ENCODE measurements at regions of chr4 and their contacts with region 1.

Region 1: GRCh38 chr4:76179398-76180318 is 31.5 kb upstream of the NUP54 start:
- DNase-seq: peak; percentile 66 to 76 (median 73)
- H3K4me3 ChIP-seq: no peak overlapping the region
- H3K4me3 Mint-ChIP-seq: no peak overlapping the region
- H3K27ac ChIP-seq: no peak overlapping the region
- H3K27ac Mint-ChIP-seq: no peak overlapping the region
- H3K4me1 ChIP-seq: no peaks in the 10 kb centered on the region
- H3K4me1 Mint-ChIP-seq: peaks cover 0 to 3% (median 0%) of the 10 kb centered on the region in 4 donors
- H3K27me3 ChIP-seq: no peaks in the 10 kb centered on the region
- H3K27me3 Mint-ChIP-seq: no peaks in the 10 kb centered on the region

Region 2: GRCh38 chr4:76035141-76035540 is 144.5 kb before region 1 on chr4:
- CTCF ChIA-PET with region 1: no interaction called
- POLR2A ChIA-PET with region 1: no interaction called
- intact Hi-C with region 1: no loop called
- DNase-seq: no peak
- H3K4me3 ChIP-seq: no peak overlapping the region
- H3K4me3 Mint-ChIP-seq: no peak overlapping the region
- H3K27ac ChIP-seq: no peak overlapping the region
- H3K27ac Mint-ChIP-seq: no peak overlapping the region
- H3K4me1 ChIP-seq: no peaks in the 10 kb centered on the region
- H3K4me1 Mint-ChIP-seq: no peaks in the 10 kb centered on the region
- H3K27me3 ChIP-seq: no peaks in the 10 kb centered on the region
- H3K27me3 Mint-ChIP-seq: no peaks in the 10 kb centered on the region

Region 3: GRCh38 chr4:76148142-76148865 is 31.4 kb before region 1 on chr4 and contains the start of gene NUP54:
- CTCF ChIA-PET with region 1: interaction called, 11 read pairs
- POLR2A ChIA-PET with region 1: interaction called, 3 read pairs
- intact Hi-C with region 1: loop called (anchors 1 kb)
- DNase-seq: peak; percentile 92 to 94 (median 93)
- H3K4me3 ChIP-seq: peak within 1 kb of the TSS; percentile 54 to 88
- H3K4me3 Mint-ChIP-seq: peak within 1 kb of the TSS; percentile 92 to 100 (median 98)
- H3K27ac ChIP-seq: peak within 1 kb of the TSS; percentile 88
- H3K27ac Mint-ChIP-seq: peak within 1 kb of the TSS; percentile 84 to 100 (median 98)
- H3K4me1 ChIP-seq: peaks cover 34% of the 10 kb centered on the region
- H3K4me1 Mint-ChIP-seq: peaks cover 21 to 46% (median 34%) of the 10 kb centered on the region in 4 donors
- H3K27me3 ChIP-seq: no peaks in the 10 kb centered on the region
- H3K27me3 Mint-ChIP-seq: no peaks in the 10 kb centered on the region
- total RNA-seq, gene NUP54: 49.3 to 52.8 TPM

Region 4: GRCh38 chr4:76208005-76208765 is 28.5 kb after region 1 on chr4:
- CTCF ChIA-PET with region 1: interaction called, 31 read pairs
- POLR2A ChIA-PET with region 1: interaction called, 7 read pairs
- intact Hi-C with region 1: loop called (anchors 2 kb)
- DNase-seq: no peak
- H3K4me3 ChIP-seq: no peak overlapping the region
- H3K4me3 Mint-ChIP-seq: no peak overlapping the region
- H3K27ac ChIP-seq: no peak overlapping the region
- H3K27ac Mint-ChIP-seq: peak overlapping the region in 4 of 7 donors; percentile 9 to 44 (median 37)
- H3K4me1 ChIP-seq: peaks cover 30% of the 10 kb centered on the region
- H3K4me1 Mint-ChIP-seq: peaks cover 46 to 77% (median 61%) of the 10 kb centered on the region in 4 donors
- H3K27me3 ChIP-seq: no peaks in the 10 kb centered on the region
- H3K27me3 Mint-ChIP-seq: no peaks in the 10 kb centered on the region

Region 5: DNA sequence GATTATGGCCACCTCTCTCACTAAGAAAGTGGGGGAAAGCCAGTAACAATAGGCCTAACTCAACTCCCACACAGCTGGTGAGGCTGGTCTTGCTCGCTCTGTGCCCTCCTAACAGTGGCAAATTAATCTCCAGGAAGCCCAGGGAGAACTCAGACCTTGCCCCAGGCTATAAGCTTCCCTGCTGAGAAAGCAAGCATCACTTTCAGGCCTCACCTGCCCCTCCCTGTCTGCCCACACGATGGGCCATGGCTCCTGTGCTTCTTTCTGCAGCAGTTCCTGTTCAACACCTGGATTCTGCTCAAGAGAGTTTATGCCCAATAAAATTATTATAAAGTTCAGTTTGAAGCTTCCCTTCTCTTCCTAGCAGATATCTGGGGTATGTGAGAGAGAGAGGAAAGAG is 50.6 kb after region 1 on chr4:
- CTCF ChIA-PET with region 1: interaction called, 11 read pairs
- POLR2A ChIA-PET with region 1: no interaction called
- intact Hi-C with region 1: no loop called
- DNase-seq: no peak
- H3K4me3 ChIP-seq: no peak overlapping the region
- H3K4me3 Mint-ChIP-seq: no peak overlapping the region
- H3K27ac ChIP-seq: no peak overlapping the region
- H3K27ac Mint-ChIP-seq: no peak overlapping the region
- H3K4me1 ChIP-seq: no peaks in the 10 kb centered on the region
- H3K4me1 Mint-ChIP-seq: peaks cover 0 to 2% (median 0%) of the 10 kb centered on the region in 4 donors
- H3K27me3 ChIP-seq: no peaks in the 10 kb centered on the region
- H3K27me3 Mint-ChIP-seq: peaks cover 4 to 16% of the 10 kb centered on the region in 2 donors

Region 6: GRCh38 chr4:76305971-76306881 is 126.6 kb after region 1 on chr4 and contains the start of gene STBD1:
- CTCF ChIA-PET with region 1: interaction called, 24 read pairs
- POLR2A ChIA-PET with region 1: interaction called, 4 read pairs
- intact Hi-C with region 1: no loop called
- DNase-seq: peak; percentile 24 to 43 (median 32)
- H3K4me3 ChIP-seq: peak within 1 kb of the TSS; percentile 30 to 68
- H3K4me3 Mint-ChIP-seq: peak within 1 kb of the TSS; percentile 81 to 93 (median 86)
- H3K27ac ChIP-seq: peak within 1 kb of the TSS; percentile 34
- H3K27ac Mint-ChIP-seq: peak within 1 kb of the TSS; percentile 12 to 83 (median 60)
- H3K4me1 ChIP-seq: peaks cover 39% of the 10 kb centered on the region
- H3K4me1 Mint-ChIP-seq: peaks cover 29 to 54% (median 41%) of the 10 kb centered on the region in 4 donors
- H3K27me3 ChIP-seq: no peaks in the 10 kb centered on the region
- H3K27me3 Mint-ChIP-seq: no peaks in the 10 kb centered on the region
- total RNA-seq, gene STBD1: 3.6 to 3.8 TPM

Region 7: DNA sequence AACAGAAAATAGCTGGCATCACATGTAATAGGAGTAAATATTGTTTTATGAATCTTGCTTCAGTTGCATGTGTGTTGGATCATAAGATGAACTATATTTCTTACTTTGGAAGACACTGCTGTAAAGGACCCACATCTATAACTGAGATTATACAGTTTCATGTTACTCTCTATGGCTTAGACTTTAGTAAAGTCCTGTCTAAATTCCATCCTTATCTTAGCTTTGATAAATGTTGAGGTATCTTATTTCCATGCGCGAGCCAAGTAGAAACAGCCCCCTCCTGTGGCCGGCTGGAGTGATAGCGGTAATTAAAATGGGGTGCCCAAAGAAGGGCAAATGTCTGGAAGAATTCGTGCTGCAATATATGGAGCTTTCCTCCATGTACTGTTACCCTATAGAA is 198.3 kb after region 1 on chr4:
- CTCF ChIA-PET with region 1: interaction called, 305 read pairs
- POLR2A ChIA-PET with region 1: interaction called, 6 read pairs
- intact Hi-C with region 1: loop called (anchors 1 kb)
- DNase-seq: peak in 4 of 5 donors; percentile 24 to 49 (median 32)
- H3K4me3 ChIP-seq: no peak overlapping the region
- H3K4me3 Mint-ChIP-seq: no peak overlapping the region
- H3K27ac ChIP-seq: no peak overlapping the region
- H3K27ac Mint-ChIP-seq: no peak overlapping the region
- H3K4me1 ChIP-seq: no peaks in the 10 kb centered on the region
- H3K4me1 Mint-ChIP-seq: peaks cover 0 to 2% (median under 1%) of the 10 kb centered on the region in 4 donors
- H3K27me3 ChIP-seq: no peaks in the 10 kb centered on the region
- H3K27me3 Mint-ChIP-seq: peaks cover 0 to 9% of the 10 kb centered on the region in 2 donors

Region 8: GRCh38 chr4:76504613-76505465 is 325.2 kb after region 1 on chr4:
- CTCF ChIA-PET with region 1: interaction called, 108 read pairs
- POLR2A ChIA-PET with region 1: no interaction called
- intact Hi-C with region 1: no loop called
- DNase-seq: peak in 4 of 5 donors; percentile 19 to 36 (median 32)
- H3K4me3 ChIP-seq: no peak overlapping the region
- H3K4me3 Mint-ChIP-seq: no peak overlapping the region
- H3K27ac ChIP-seq: no peak overlapping the region
- H3K27ac Mint-ChIP-seq: no peak overlapping the region
- H3K4me1 ChIP-seq: no peaks in the 10 kb centered on the region
- H3K4me1 Mint-ChIP-seq: no peaks in the 10 kb centered on the region
- H3K27me3 ChIP-seq: no peaks in the 10 kb centered on the region
- H3K27me3 Mint-ChIP-seq: peaks cover 8 to 14% of the 10 kb centered on the region in 2 donors